A673 (cell line): ENCODE measurements at regions of chr2 and their contacts with region 1.

Region 1: GRCh38 chr2:197499594-197500526 is at the starts of genes HSPD1 and HSPE1:
- DNase-seq: peak; percentile 100
- H3K4me3 ChIP-seq: peak within 1 kb of the TSS; percentile 89
- H3K27ac ChIP-seq: peak within 1 kb of the TSS; percentile 97
- H3K4me1 ChIP-seq: peaks cover 41% of the 10 kb centered on the region
- H3K27me3 ChIP-seq: no peaks in the 10 kb centered on the region
- CTCF ChIP-seq: no peak
- total RNA-seq, gene HSPD1: 737 and 812 TPM in 2 replicates
- total RNA-seq, gene HSPE1: 296 and 356 TPM in 2 replicates

Region 2: GRCh38 chr2:197327472-197328098 is 172.3 kb before region 1 on chr2:
- CTCF ChIA-PET with region 1: no interaction called
- POLR2A ChIA-PET with region 1: no interaction called
- intact Hi-C with region 1: no loop called
- DNase-seq: peak; percentile 17
- H3K4me3 ChIP-seq: no peak overlapping the region
- H3K27ac ChIP-seq: peak overlapping the region; percentile 17
- H3K4me1 ChIP-seq: peaks cover 10% of the 10 kb centered on the region
- H3K27me3 ChIP-seq: no peaks in the 10 kb centered on the region
- CTCF ChIP-seq: no peak

Region 3: GRCh38 chr2:197405582-197405981 is 94.3 kb before region 1 on chr2:
- CTCF ChIA-PET with region 1: no interaction called
- POLR2A ChIA-PET with region 1: no interaction called
- intact Hi-C with region 1: loop called (anchors 5 kb)
- DNase-seq: no peak
- H3K4me3 ChIP-seq: no peak overlapping the region
- H3K27ac ChIP-seq: no peak overlapping the region
- H3K4me1 ChIP-seq: no peaks in the 10 kb centered on the region
- H3K27me3 ChIP-seq: no peaks in the 10 kb centered on the region
- CTCF ChIP-seq: no peak

Region 4: DNA sequence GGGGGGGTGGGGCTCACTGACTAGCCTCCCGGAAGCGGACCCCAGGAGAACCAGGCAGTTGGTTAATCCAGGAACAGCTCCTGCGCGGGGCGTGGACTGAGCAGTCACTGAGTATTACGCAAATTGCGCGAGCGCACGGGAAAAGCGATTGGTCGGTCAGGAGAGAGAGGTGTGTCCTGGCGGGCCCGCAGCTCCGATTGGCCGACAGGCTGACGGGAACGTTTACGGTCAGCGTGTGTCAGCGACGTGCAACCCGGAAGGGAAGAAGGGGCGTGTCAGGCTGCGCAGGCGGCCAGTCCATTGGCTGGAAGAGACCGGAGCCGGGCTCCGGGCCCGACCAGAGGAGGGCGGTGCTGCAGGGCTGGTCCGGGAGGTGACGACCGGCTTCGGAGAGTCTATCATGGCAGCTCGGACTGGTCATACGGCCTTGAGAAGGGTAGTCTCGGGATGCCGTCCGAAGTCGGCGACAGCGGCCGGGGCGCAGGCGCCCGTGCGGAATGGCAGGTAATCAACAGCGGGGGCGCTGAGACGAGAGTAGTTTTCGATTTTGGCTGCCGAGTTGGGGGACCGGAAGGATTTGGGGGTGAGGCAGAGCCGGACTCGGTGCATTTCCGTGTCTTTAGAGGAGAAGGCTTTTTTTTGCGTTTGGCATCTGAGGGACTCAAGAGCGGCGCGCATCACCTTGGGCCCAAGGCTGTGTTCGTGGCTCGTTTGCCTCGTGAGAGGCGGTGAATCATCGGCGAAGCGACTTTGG is 46.5 kb before region 1 on chr2 and contains the start of gene COQ10B:
- CTCF ChIA-PET with region 1: interaction called, 3 read pairs
- POLR2A ChIA-PET with region 1: no interaction called
- intact Hi-C with region 1: loop called (anchors 2 kb)
- DNase-seq: peak; percentile 99
- H3K4me3 ChIP-seq: peak within 1 kb of the TSS; percentile 86
- H3K27ac ChIP-seq: peak within 1 kb of the TSS; percentile 92
- H3K4me1 ChIP-seq: no peaks in the 10 kb centered on the region
- H3K27me3 ChIP-seq: no peaks in the 10 kb centered on the region
- CTCF ChIP-seq: peak; percentile 49
- total RNA-seq, gene COQ10B: 15.2 and 17.1 TPM in 2 replicates

Region 5: GRCh38 chr2:197705121-197705911 is 205.5 kb after region 1 on chr2 and contains the start of gene MARS2:
- CTCF ChIA-PET with region 1: no interaction called
- POLR2A ChIA-PET with region 1: no interaction called
- intact Hi-C with region 1: loop called (anchors 5 kb)
- DNase-seq: peak; percentile 95
- H3K4me3 ChIP-seq: peak within 1 kb of the TSS; percentile 95
- H3K27ac ChIP-seq: peak within 1 kb of the TSS; percentile 87
- H3K4me1 ChIP-seq: peaks cover 7% of the 10 kb centered on the region
- H3K27me3 ChIP-seq: no peaks in the 10 kb centered on the region
- CTCF ChIP-seq: no peak
- total RNA-seq, gene MARS2: 13.2 and 14.6 TPM in 2 replicates